CD4-positive, alpha-beta memory T cell (primary cell): ENCODE measurements at regions of chr4 and their contacts with region 1.

Region 1: GRCh38 chr4:4488405-4489404 is 53.1 kb downstream of the STX18 start:
- DNase-seq: peak; percentile 59 to 68 (median 67)
- H3K4me3 ChIP-seq: no peak overlapping the region
- H3K4me3 Mint-ChIP-seq: no peak overlapping the region
- H3K27ac ChIP-seq: no peak overlapping the region
- H3K27ac Mint-ChIP-seq: no peak overlapping the region
- H3K4me1 ChIP-seq: peaks cover 5% of the 10 kb centered on the region
- H3K4me1 Mint-ChIP-seq: peaks cover 5 to 15% (median 9%) of the 10 kb centered on the region in 4 donors
- H3K27me3 ChIP-seq: no peaks in the 10 kb centered on the region
- H3K27me3 Mint-ChIP-seq: no peaks in the 10 kb centered on the region

Region 2: GRCh38 chr4:4502694-4503311 is 14.1 kb after region 1 on chr4:
- CTCF ChIA-PET with region 1: interaction called, 9 read pairs
- POLR2A ChIA-PET with region 1: no interaction called
- intact Hi-C with region 1: loop called (anchors 1 kb)
- DNase-seq: peak; percentile 27 to 39 (median 32)
- H3K4me3 ChIP-seq: peak overlapping the region in 1 of 2 donors; percentile 43
- H3K4me3 Mint-ChIP-seq: peak overlapping the region; percentile 71 to 84 (median 80)
- H3K27ac ChIP-seq: peak overlapping the region; percentile 38
- H3K27ac Mint-ChIP-seq: peak overlapping the region; percentile 12 to 86 (median 76)
- H3K4me1 ChIP-seq: peaks cover 12% of the 10 kb centered on the region
- H3K4me1 Mint-ChIP-seq: peaks cover 9 to 13% (median 10%) of the 10 kb centered on the region in 4 donors
- H3K27me3 ChIP-seq: no peaks in the 10 kb centered on the region
- H3K27me3 Mint-ChIP-seq: no peaks in the 10 kb centered on the region

Region 3: DNA sequence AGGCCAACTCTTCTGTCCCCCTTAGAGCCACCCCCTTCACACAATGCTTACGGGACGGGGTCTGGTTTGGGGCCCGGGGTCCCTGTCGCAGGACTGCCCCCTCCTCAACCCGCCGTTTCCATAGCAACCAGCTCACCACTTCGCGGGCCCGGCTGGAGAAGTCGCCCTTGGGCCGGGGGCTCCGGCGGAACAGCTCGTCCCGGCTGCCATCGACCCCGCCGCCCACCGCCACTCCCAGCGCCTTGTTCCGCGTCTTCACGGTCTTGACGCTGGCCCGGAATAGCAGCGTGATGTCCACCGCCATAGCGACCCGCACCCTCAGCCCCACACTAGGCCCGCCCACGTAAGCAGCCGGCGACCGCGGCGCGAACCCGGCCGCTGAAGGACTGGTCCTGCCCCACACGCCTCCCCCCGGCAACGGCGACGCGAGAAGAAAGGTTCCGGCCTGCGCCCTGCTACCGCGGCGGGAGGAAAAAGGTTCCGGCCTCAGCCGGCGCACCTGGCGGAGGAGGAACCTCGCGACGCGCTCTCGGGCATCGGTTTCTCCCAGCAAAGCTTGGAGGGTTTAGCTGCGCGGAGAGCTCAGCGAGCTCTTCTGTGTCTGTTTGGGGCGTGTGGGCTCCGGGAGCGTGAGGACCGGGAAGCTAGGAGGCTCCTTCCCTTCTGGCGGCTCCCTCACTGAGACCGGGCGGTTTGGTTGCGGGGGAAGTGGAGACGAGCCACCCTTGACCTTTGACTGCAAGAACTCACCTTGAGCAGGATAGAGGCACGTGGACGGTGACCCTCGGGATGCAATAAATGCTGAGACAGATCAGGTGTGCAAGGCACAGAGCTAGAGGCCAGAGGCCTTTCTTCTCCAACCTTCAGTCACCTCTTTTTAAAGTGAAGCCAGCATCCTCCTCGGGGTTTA is 53.2 kb after region 1 on chr4 and contains the start of gene STX18:
- CTCF ChIA-PET with region 1: interaction called, 3 read pairs
- POLR2A ChIA-PET with region 1: no interaction called
- intact Hi-C with region 1: loop called (anchors 5 kb)
- DNase-seq: peak; percentile 83 to 88 (median 85)
- H3K4me3 ChIP-seq: peak within 1 kb of the TSS; percentile 77 to 88
- H3K4me3 Mint-ChIP-seq: peak within 1 kb of the TSS; percentile 92 to 99 (median 96)
- H3K27ac ChIP-seq: peak within 1 kb of the TSS; percentile 63
- H3K27ac Mint-ChIP-seq: peak within 1 kb of the TSS; percentile 92 to 97 (median 95)
- H3K4me1 ChIP-seq: peaks cover 35% of the 10 kb centered on the region
- H3K4me1 Mint-ChIP-seq: peaks cover 28 to 72% (median 50%) of the 10 kb centered on the region in 4 donors
- H3K27me3 ChIP-seq: no peaks in the 10 kb centered on the region
- H3K27me3 Mint-ChIP-seq: no peaks in the 10 kb centered on the region
- total RNA-seq, gene STX18: 33.2 to 34.5 TPM

Region 4: DNA sequence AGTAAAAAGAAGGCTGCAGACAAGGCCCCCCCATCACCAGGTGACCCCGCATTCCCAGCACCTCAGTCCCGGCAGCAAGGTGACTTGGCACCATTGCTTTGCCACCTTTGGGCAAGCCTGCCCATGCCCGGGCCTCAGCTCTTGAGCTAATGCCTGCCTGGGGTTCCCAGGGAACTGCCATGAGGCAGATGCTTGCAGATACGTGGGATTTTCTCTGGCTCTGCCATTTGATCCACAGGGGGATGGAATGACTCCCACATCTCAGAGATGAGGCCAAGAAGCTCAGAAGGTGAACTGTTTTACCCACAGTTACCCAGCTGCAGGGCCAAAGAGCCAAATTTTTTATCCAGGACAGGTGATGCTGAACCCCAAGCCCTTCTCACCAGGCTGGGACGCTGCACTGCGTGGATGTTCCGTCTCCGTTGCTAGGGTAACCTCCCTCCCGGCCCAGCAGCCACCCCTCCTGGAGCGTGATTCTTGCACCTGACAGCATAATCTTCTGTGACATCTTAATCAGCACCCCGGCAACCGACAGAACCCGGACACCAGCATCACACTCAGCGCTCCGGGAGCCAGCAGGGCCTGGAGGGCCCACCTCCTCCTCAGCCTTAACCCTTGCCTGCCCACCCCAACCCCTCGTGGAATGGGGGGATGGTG is 355.1 kb after region 1 on chr4:
- CTCF ChIA-PET with region 1: no interaction called
- POLR2A ChIA-PET with region 1: no interaction called
- intact Hi-C with region 1: no loop called
- DNase-seq: peak in 1 of 5 donors; percentile 40
- H3K4me3 ChIP-seq: no peak overlapping the region
- H3K4me3 Mint-ChIP-seq: no peak overlapping the region
- H3K27ac ChIP-seq: no peak overlapping the region
- H3K27ac Mint-ChIP-seq: no peak overlapping the region
- H3K4me1 ChIP-seq: no peaks in the 10 kb centered on the region
- H3K4me1 Mint-ChIP-seq: peaks cover 0 to 11% (median 3%) of the 10 kb centered on the region in 4 donors
- H3K27me3 ChIP-seq: no peaks in the 10 kb centered on the region
- H3K27me3 Mint-ChIP-seq: peaks cover 6 to 15% of the 10 kb centered on the region in 2 donors

Region 5: GRCh38 chr4:4880492-4880891 is 391.8 kb after region 1 on chr4:
- CTCF ChIA-PET with region 1: interaction called, 4 read pairs
- POLR2A ChIA-PET with region 1: no interaction called
- intact Hi-C with region 1: loop called (anchors 1 kb)
- DNase-seq: no peak
- H3K4me3 ChIP-seq: no peak overlapping the region
- H3K4me3 Mint-ChIP-seq: no peak overlapping the region
- H3K27ac ChIP-seq: no peak overlapping the region
- H3K27ac Mint-ChIP-seq: no peak overlapping the region
- H3K4me1 ChIP-seq: no peaks in the 10 kb centered on the region
- H3K4me1 Mint-ChIP-seq: peaks cover 0 to 1% (median 0%) of the 10 kb centered on the region in 4 donors
- H3K27me3 ChIP-seq: no peaks in the 10 kb centered on the region
- H3K27me3 Mint-ChIP-seq: peaks cover 30 to 32% of the 10 kb centered on the region in 2 donors

Region 6: GRCh38 chr4:5142726-5143125 is 654.0 kb after region 1 on chr4:
- CTCF ChIA-PET with region 1: no interaction called
- POLR2A ChIA-PET with region 1: no interaction called
- intact Hi-C with region 1: loop called (anchors 10 kb)
- DNase-seq: no peak
- H3K4me3 ChIP-seq: no peak overlapping the region
- H3K4me3 Mint-ChIP-seq: no peak overlapping the region
- H3K27ac ChIP-seq: no peak overlapping the region
- H3K27ac Mint-ChIP-seq: no peak overlapping the region
- H3K4me1 ChIP-seq: no peaks in the 10 kb centered on the region
- H3K4me1 Mint-ChIP-seq: no peaks in the 10 kb centered on the region
- H3K27me3 ChIP-seq: no peaks in the 10 kb centered on the region
- H3K27me3 Mint-ChIP-seq: peaks cover 8 to 12% of the 10 kb centered on the region in 2 donors